Heart right ventricle (tissue), 16 donors: ENCODE measurements at regions of chr10 and their contacts with region 1.

Region 1: DNA sequence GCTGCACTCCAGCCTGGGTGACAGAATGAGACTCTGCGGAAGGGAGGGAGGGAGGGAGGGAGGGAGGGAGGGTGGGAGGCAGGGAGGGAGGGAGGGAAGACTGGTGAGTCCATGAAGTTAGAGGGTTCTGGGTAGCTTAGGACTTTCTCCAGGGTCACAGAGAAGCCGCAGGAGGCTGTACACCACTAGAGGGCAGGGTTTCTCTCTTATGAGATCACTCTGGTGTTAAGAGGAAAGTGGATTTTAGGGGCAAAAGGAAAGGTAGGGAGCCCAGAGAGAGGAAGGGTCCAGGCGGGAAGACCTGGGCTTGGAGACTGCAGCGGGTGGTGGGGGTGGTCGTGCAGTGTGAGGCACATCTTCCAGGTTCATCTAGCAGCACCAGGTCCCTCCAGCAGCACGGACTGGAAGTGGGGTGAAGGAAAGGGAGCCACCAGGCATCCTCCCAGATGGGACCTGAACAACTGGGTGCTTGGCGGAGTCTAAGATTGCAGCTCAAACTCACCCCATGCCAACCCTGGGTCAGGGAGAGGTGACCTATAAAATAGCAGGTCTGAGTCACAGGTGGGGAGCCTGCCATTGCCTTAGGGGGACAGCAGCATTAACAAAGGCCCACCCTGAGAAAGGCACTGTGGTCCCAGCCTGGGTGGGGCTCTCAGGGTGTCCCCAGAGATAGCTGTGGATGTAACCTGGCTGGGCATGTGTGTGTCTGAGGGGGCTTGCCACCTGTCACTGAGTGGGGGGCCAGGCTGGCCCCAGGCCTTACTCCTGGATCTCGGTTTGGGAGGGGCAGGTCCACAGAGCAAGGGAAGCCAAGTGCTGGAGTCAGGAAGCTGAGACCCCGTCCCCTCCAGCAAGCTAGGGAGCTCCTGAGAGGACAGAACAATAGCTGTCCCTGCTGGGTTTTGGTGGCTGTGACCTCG is 48.5 kb upstream of the SLC29A3 start:
- DNase-seq: peak; percentile 24 to 60
- ATAC-seq: peak in 7 of 8 donors; percentile 6 to 47 (median 30)
- H3K4me3 ChIP-seq: no peak overlapping the region
- H3K27ac ChIP-seq: peak overlapping the region in 7 of 10 donors; percentile 43 to 87 (median 77)
- H3K4me1 ChIP-seq: peaks cover 30 to 99% (median 67%) of the 10 kb centered on the region in 9 donors
- H3K27me3 ChIP-seq: no peaks in the 10 kb centered on the region
- CTCF ChIP-seq: peak; percentile 36 to 72 (median 62)

Region 2: GRCh38 chr10:70903262-70903921 is 367.2 kb before region 1 on chr10:
- intact Hi-C with region 1: loop called in 1 of 10 experiments (anchors 5 kb)
- DNase-seq: peak; percentile 59 to 77
- ATAC-seq: peak; percentile 31 to 78 (median 74)
- H3K4me3 ChIP-seq: peak overlapping the region in 1 of 10 donors; percentile 10
- H3K27ac ChIP-seq: no peak overlapping the region
- H3K4me1 ChIP-seq: peaks cover 0 to 24% (median 11%) of the 10 kb centered on the region in 9 donors
- H3K27me3 ChIP-seq: peaks cover 0 to 5% (median 0%) of the 10 kb centered on the region in 7 donors
- CTCF ChIP-seq: peak; percentile 86 to 96 (median 93)

Region 3: DNA sequence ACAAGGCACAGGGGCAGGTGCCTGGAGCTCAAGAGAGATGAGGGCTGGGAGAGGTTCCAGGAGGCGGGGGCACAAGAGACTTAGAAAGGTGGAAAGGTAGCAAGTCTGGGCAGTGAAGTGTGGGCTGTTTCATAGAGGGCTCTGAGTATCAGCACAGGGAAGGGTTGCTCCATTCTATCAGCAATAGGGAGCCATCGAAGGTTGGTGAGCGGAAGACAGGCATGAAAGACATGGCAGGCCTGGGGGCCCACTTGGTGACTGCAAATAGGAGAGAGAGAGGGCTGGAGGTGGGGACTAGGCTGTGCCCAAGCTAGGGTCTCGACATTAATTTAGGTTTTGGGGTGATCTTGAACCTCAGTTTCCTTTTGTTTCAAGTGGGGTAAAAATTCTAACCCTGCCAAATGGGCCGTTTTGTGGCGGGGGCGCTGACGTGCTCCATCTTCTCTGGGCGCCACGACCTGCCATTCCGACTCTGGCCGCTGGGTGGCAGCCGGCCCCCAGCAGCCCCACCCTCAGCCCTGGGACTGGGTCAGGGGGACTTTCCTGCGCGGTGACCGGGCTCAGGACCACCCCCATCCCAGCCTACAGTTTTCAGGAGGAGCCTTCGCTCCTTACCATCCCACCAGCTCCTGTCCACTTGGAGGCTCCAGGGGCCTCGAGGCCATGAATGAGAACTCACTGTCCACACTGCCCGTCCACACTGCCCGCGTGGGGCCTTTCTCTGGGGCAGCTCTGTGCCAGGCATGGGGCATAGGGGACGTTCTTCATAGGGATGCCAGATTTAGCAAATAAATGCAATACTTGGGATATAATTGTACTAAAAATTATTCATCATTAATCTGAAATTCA is 345.0 kb before region 1 on chr10:
- intact Hi-C with region 1: loop called in 1 of 10 experiments (anchors 5 kb)
- DNase-seq: peak; percentile 32 to 62
- ATAC-seq: peak; percentile 65 to 87 (median 83)
- H3K4me3 ChIP-seq: no peak overlapping the region
- H3K27ac ChIP-seq: peak overlapping the region in 1 of 10 donors; percentile 55
- H3K4me1 ChIP-seq: peaks cover 0 to 13% (median 4%) of the 10 kb centered on the region in 9 donors
- H3K27me3 ChIP-seq: peaks cover 0 to 10% (median 0%) of the 10 kb centered on the region in 7 donors
- CTCF ChIP-seq: peak; percentile 83 to 99 (median 94)

Region 4: GRCh38 chr10:71234970-71235685 is 35.4 kb before region 1 on chr10:
- intact Hi-C with region 1: loop called in 2 of 10 experiments (anchors 5 kb)
- DNase-seq: peak; percentile 70 to 74
- ATAC-seq: peak; percentile 53 to 84 (median 74)
- H3K4me3 ChIP-seq: peak overlapping the region in 4 of 10 donors; percentile 12 to 30 (median 20)
- H3K27ac ChIP-seq: peak overlapping the region; percentile 13 to 85 (median 64)
- H3K4me1 ChIP-seq: peaks cover 59 to 100% (median 87%) of the 10 kb centered on the region in 9 donors
- H3K27me3 ChIP-seq: no peaks in the 10 kb centered on the region
- CTCF ChIP-seq: no peak

Region 5: DNA sequence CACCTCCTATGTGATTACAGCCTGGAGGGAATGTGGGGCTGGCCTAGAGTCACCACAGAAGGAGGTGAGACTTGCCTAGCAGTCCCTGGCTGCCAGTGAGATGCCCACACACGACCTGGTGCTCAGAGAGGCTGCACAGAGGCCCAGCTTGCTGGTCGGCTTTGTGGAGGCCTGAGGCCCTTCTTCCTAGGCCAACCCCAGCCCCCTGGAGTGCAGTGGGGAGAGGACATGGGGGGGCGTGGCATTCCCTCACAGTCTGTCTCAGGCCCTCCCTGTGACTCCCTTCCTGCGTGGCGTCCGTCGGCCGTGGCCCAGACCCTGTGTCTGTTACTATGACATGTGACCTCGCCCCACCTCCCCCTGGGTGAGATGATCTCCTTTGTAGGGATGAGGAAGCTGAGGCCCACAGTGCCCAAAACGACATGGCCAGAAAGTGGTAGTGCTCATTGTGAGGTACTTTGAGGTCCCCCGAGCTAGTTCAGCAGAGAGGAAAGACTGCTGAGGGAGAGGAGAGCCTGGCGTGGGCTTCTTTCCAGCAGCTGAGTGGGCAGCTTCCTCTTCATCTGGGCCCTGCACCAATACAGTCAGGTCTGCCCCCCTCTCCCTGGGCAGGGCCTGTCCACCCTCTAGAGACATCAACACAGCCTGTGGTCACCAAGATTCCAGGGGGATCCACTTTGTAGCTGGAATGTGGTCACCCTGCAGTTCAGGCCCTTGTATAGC is 28.5 kb before region 1 on chr10:
- intact Hi-C with region 1: loop called in 1 of 10 experiments (anchors 1 kb)
- DNase-seq: peak; percentile 48 to 53
- ATAC-seq: peak in 7 of 8 donors; percentile 5 to 34 (median 30)
- H3K4me3 ChIP-seq: no peak overlapping the region
- H3K27ac ChIP-seq: peak overlapping the region; percentile 14 to 80 (median 52)
- H3K4me1 ChIP-seq: peaks cover 69 to 100% (median 88%) of the 10 kb centered on the region in 9 donors
- H3K27me3 ChIP-seq: no peaks in the 10 kb centered on the region
- CTCF ChIP-seq: no peak